ENCODE measurements at regions of chr1 and their contacts with region 1.

Region 1: GRCh38 chr1:200802865-200803512 is 64.3 kb downstream of the CAMSAP2 start:
- DNase-seq: peak; percentile 49
- H3K4me3 Mint-ChIP-seq: no peak overlapping the region
- H3K27ac Mint-ChIP-seq: no peak overlapping the region
- H3K4me1 Mint-ChIP-seq: no peaks in the 10 kb centered on the region
- H3K27me3 Mint-ChIP-seq: peaks cover 14% of the 10 kb centered on the region

Region 2: DNA sequence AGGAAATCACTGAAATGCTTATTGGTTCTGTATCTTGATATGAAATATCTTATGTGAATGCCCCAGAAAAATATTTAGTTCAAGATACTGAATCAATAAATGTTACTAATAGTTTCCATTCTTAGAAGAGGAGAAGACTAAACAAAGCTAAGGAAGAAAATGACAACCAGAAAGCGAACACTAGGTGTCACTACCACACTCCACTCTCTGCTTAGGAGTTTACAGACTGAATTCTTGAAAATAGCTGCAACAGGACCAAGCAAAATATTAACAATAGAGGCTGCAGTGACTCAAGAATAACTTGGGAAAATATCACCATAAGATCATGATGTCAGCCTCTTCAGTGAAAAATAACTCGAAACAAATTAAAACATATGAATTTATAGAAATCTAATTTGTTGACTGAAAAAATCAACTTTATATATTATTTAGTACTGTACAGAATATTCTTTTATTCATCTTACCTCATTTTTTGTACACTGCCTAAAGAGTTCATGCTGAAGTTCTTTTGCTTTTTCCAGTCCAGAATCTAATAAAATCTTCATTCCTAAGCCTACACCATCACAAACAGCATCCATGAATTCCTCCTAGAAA is 244.0 kb before region 1 on chr1:
- intact Hi-C with region 1: loop called (anchors 1 kb)
- DNase-seq: no peak
- H3K4me3 Mint-ChIP-seq: no peak overlapping the region
- H3K27ac Mint-ChIP-seq: no peak overlapping the region
- H3K4me1 Mint-ChIP-seq: peaks cover 16% of the 10 kb centered on the region
- H3K27me3 Mint-ChIP-seq: no peaks in the 10 kb centered on the region

Region 3: GRCh38 chr1:200669314-200670241 is 133.4 kb before region 1 on chr1 and contains the start of gene DDX59:
- intact Hi-C with region 1: loop called (anchors 2 kb)
- DNase-seq: peak; percentile 89
- H3K4me3 Mint-ChIP-seq: peak within 1 kb of the TSS; percentile 99
- H3K27ac Mint-ChIP-seq: peak within 1 kb of the TSS; percentile 99
- H3K4me1 Mint-ChIP-seq: peaks cover 49% of the 10 kb centered on the region
- H3K27me3 Mint-ChIP-seq: peaks cover 3% of the 10 kb centered on the region
- total RNA-seq, gene DDX59: 13.8 and 14.4 TPM in 2 replicates

Region 4: GRCh38 chr1:200738740-200739498 is 64.1 kb before region 1 on chr1 and contains the start of gene CAMSAP2:
- intact Hi-C with region 1: loop called (anchors 5 kb)
- DNase-seq: peak; percentile 52
- H3K4me3 Mint-ChIP-seq: peak within 1 kb of the TSS; percentile 91
- H3K27ac Mint-ChIP-seq: peak within 1 kb of the TSS; percentile 80
- H3K4me1 Mint-ChIP-seq: peaks cover 23% of the 10 kb centered on the region
- H3K27me3 Mint-ChIP-seq: peaks cover 40% of the 10 kb centered on the region
- total RNA-seq, gene CAMSAP2: 0.83 and 1.3 TPM in 2 replicates

Measured in activated T-helper 1 cell treated with anti-CD3 and anti-CD28 coated beads, Interleukin-12 subunit alpha, Interleukin-12 subunit beta, Interleukin-2, Interleukin-4 antibody, amounts not matched to agents 30 ng/mL and 10 ng/mL and 1 ng/mL, durations not matched to agents 14 hours and 24 hours and 36 hours (primary cell).